Esophagus squamous epithelium (tissue), 5 donors: ENCODE measurements at regions of chr15 and their contacts with region 1.

Region 1: GRCh38 chr15:66685638-66686150 is 16.3 kb upstream of the SMAD6 start:
- DNase-seq: no peak
- H3K4me3 ChIP-seq: no peak overlapping the region
- H3K27ac ChIP-seq: no peak overlapping the region
- H3K4me1 ChIP-seq: no peaks in the 10 kb centered on the region
- H3K27me3 ChIP-seq: no peaks in the 10 kb centered on the region
- CTCF ChIP-seq: peak in 3 of 6 experiments; percentile 6 to 43 (median 19)
- POLR2A ChIP-seq: no peak

Region 2: GRCh38 chr15:66841953-66842681 is 156.4 kb after region 1 on chr15:
- intact Hi-C with region 1: loop called (anchors 10 kb)
- DNase-seq: peak; percentile 25
- H3K4me3 ChIP-seq: peak overlapping the region; percentile 30 to 74 (median 45)
- H3K27ac ChIP-seq: peak overlapping the region; percentile 81 to 98 (median 90)
- H3K4me1 ChIP-seq: peaks cover 15 to 34% (median 17%) of the 10 kb centered on the region in 3 donors
- H3K27me3 ChIP-seq: peaks cover 0 to 43% (median 0%) of the 10 kb centered on the region in 4 donors
- CTCF ChIP-seq: peak in 1 of 6 experiments; percentile 8
- POLR2A ChIP-seq: peak in 1 of 4 donors; percentile 30